Vagina (tissue), 2 donors: ENCODE measurements at regions of chr1 and their contacts with region 1.

Region 1: GRCh38 chr1:222455188-222455879 is 92.6 kb downstream of the HHIPL2 start:
- DNase-seq: no peak
- H3K4me3 ChIP-seq: peak overlapping the region; percentile 7 to 17
- H3K27ac ChIP-seq: peak overlapping the region; percentile 39
- H3K4me1 ChIP-seq: peaks cover 13% of the 10 kb centered on the region
- H3K27me3 ChIP-seq: no peaks in the 10 kb centered on the region
- CTCF ChIP-seq: peak; percentile 32 to 86 (median 75)
- POLR2A ChIP-seq: no peak

Region 2: DNA sequence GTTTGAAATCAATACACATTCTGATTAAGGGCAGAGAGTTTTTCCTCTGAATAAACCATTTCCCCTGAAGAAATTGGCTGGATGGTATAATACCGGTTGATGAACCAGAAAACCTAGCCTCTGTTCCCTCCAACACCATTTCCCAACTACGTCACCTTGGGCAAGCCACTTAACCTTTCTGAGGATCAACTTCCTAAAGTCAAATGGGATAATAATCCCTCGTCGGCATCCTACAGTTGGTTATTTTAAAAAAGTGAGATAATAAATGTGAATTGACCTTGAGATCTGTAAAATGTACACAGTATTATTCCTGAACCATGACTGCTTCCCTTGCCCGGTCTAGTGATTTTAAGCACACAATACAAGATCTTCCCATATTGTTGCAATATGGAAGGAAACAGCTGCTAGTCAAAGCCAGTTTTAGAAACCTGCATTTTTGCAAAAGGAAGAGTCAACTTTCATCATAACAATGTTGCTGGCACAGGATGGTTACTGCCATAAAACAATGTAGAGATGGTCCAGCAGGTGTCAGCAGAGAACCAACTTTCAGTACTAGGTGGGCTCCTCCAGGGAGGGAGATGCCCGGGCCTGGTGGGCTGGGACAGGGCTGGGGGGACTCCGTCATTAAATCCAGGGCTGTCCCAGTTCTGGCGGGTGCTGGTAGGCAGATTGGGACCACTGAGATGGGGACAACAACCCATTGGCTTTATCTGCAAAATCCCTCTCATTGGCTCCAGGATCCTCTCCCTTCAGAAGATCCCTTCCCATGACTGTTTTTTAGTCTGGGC is 1581.3 kb before region 1 on chr1:
- intact Hi-C with region 1: loop called (anchors 5 kb)
- DNase-seq: peak; percentile 81 to 89
- H3K4me3 ChIP-seq: no peak overlapping the region
- H3K27ac ChIP-seq: no peak overlapping the region
- H3K4me1 ChIP-seq: peaks cover 18% of the 10 kb centered on the region
- H3K27me3 ChIP-seq: no peaks in the 10 kb centered on the region
- CTCF ChIP-seq: peak; percentile 33 to 69 (median 64)
- POLR2A ChIP-seq: no peak

Region 3: GRCh38 chr1:221263831-221264767 is 1191.2 kb before region 1 on chr1:
- intact Hi-C with region 1: loop called (anchors 10 kb)
- DNase-seq: no peak
- H3K4me3 ChIP-seq: no peak overlapping the region
- H3K27ac ChIP-seq: no peak overlapping the region
- H3K4me1 ChIP-seq: no peaks in the 10 kb centered on the region
- H3K27me3 ChIP-seq: no peaks in the 10 kb centered on the region
- CTCF ChIP-seq: peak in 2 of 3 experiments; percentile 13 to 52
- POLR2A ChIP-seq: no peak

Region 4: GRCh38 chr1:222375701-222376100 is 79.6 kb before region 1 on chr1:
- intact Hi-C with region 1: no loop called
- DNase-seq: no peak
- H3K4me3 ChIP-seq: no peak overlapping the region
- H3K27ac ChIP-seq: no peak overlapping the region
- H3K4me1 ChIP-seq: no peaks in the 10 kb centered on the region
- H3K27me3 ChIP-seq: no peaks in the 10 kb centered on the region
- CTCF ChIP-seq: no peak
- POLR2A ChIP-seq: no peak

Region 5: DNA sequence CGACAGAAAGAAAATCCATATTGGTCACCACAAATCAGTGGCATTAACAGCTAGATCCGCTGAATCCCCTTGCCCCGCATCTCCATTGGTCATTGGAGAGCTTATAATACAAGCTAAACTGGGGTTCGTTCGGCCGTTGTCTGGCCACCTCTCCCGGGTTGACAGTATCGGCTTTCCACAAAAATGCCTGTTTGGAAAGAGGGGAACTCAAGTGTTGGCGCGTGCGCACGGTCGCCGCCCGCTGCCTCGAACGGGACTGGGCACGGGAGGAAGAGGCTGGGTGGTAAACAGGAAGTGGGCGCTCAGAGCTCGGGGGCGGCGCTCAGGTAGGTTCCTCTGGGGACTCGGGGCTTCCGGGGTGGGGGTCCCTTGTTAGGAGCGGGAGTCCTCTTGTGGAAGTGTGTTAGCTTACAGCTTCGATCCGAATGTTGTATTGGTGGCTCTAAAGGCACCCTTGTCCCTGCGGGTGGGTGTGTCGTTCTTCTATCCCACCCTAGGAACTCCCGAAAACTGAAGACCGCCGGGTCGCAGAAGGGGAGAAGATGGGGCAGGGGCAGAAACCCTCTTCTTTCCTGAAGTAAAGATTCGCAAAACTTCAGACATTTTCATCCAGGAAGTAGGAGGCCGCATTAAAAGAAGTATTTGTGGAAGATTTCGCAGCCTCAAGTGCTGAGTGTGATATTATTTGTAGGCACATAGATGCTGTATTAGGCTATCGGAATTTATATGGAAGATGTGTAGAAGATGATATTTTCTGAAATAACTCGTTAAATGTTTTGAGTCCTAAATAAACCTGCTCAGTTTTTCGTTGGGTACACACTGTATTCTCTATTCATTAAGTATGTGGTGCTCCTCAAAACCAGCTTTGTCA is 258.0 kb after region 1 on chr1:
- intact Hi-C with region 1: no loop called
- DNase-seq: peak in 1 of 2 donors; percentile 97
- H3K4me3 ChIP-seq: peak overlapping the region; percentile 68 to 69
- H3K27ac ChIP-seq: peak overlapping the region; percentile 98
- H3K4me1 ChIP-seq: peaks cover 60% of the 10 kb centered on the region
- H3K27me3 ChIP-seq: no peaks in the 10 kb centered on the region
- CTCF ChIP-seq: no peak
- POLR2A ChIP-seq: peak in 1 of 2 donors; percentile 39